WTC11 (cell line): ENCODE measurements at regions of chr19 and their contacts with region 1.

Region 1: GRCh38 chr19:44770550-44771257 is 7.0 kb upstream of the CBLC start:
- DNase-seq: peak; percentile 99
- ATAC-seq: peak; percentile 100
- H3K4me3 Mint-ChIP-seq: no peak overlapping the region; the same call in 1 of the 2 replicates
- H3K27ac Mint-ChIP-seq: 0 out of 2 replicates have a peak overlapping the region, but pooled peaks have one; percentile 60
- H3K4me1 Mint-ChIP-seq: peaks cover 6% of the 10 kb centered on the region
- H3K27me3 Mint-ChIP-seq: peaks cover 36% of the 10 kb centered on the region
- CTCF ChIP-seq: peak; percentile 82

Region 2: GRCh38 chr19:44653977-44654774 is 116.5 kb before region 1 on chr19:
- CTCF ChIA-PET with region 1: interaction called, 17 read pairs
- POLR2A ChIA-PET with region 1: no interaction called
- DNase-seq: peak; percentile 83
- ATAC-seq: peak; percentile 47
- H3K4me3 Mint-ChIP-seq: no peak overlapping the region
- H3K27ac Mint-ChIP-seq: no peak overlapping the region
- H3K4me1 Mint-ChIP-seq: no peaks in the 10 kb centered on the region
- H3K27me3 Mint-ChIP-seq: no peaks in the 10 kb centered on the region
- CTCF ChIP-seq: no peak

Region 3: DNA sequence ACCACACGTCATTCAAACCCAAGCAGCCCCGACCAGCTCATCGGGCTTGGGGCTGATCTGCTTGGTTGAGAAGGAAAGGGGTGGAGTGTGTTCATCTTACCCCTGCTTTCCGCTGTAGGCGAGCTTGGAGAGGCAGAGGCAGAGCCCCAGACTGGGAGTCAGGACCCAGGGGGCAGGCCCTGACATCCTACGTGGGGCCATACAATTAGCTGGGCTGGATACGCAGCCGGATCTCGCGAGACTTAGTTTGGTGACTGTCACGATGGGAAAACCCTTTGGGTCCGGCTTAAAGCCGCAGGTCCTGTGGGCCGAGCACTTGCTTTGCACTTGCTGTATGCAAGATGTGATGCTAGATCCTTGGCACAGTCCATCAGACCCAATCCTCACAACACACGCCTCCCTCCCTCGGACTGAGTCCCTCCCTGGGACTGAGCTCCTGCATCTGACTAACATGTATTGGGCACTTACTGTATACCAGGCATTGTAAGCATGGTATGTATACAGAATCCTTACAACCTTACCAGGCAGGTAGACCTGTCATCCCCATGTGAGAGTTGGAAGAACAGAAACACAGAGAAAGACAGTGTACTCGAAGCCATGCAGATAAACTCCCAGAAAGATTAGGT is 68.0 kb before region 1 on chr19:
- CTCF ChIA-PET with region 1: interaction called, 11 read pairs
- POLR2A ChIA-PET with region 1: no interaction called
- DNase-seq: no peak
- ATAC-seq: no peak
- H3K4me3 Mint-ChIP-seq: no peak overlapping the region
- H3K27ac Mint-ChIP-seq: no peak overlapping the region
- H3K4me1 Mint-ChIP-seq: peaks cover 5% of the 10 kb centered on the region
- H3K27me3 Mint-ChIP-seq: peaks cover 3% of the 10 kb centered on the region; the same call in 1 of the 2 replicates
- CTCF ChIP-seq: no peak

Region 4: DNA sequence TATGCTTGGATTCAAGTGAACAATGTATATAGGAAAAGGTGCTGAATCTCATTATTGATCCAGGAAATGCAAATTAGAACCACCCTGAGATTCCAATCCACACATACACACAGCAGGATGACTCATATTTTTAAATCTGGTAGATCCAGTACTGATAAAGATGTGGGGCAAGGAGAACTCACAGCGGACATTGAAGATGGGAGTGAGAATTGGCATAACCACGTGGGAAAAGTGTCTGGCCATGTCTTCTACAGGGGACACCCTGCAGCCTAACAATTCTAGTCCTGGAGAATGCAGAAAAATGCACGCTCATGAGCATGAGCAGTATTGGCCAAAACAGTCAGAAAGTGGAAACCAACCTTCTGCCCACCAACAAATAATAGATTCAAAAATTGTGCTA is 35.7 kb before region 1 on chr19:
- CTCF ChIA-PET with region 1: interaction called, 548 read pairs
- POLR2A ChIA-PET with region 1: no interaction called
- DNase-seq: no peak
- ATAC-seq: no peak
- H3K4me3 Mint-ChIP-seq: no peak overlapping the region
- H3K27ac Mint-ChIP-seq: no peak overlapping the region
- H3K4me1 Mint-ChIP-seq: peaks cover 7% of the 10 kb centered on the region; the same call in 1 of the 2 replicates
- H3K27me3 Mint-ChIP-seq: peaks cover 21% of the 10 kb centered on the region
- CTCF ChIP-seq: no peak

Region 5: GRCh38 chr19:44796701-44797115 is 26.0 kb after region 1 on chr19:
- CTCF ChIA-PET with region 1: interaction called, 14 read pairs
- POLR2A ChIA-PET with region 1: no interaction called
- DNase-seq: no peak
- ATAC-seq: peak; percentile 52
- H3K4me3 Mint-ChIP-seq: peak overlapping the region; percentile 6; the same call in 1 of the 2 replicates
- H3K27ac Mint-ChIP-seq: peak overlapping the region; percentile 96
- H3K4me1 Mint-ChIP-seq: peaks cover 31% of the 10 kb centered on the region
- H3K27me3 Mint-ChIP-seq: peaks cover 14% of the 10 kb centered on the region
- CTCF ChIP-seq: no peak